Activated T-helper 1 cell treated with anti-CD3 and anti-CD28 coated beads, Interleukin-12 subunit alpha, Interleukin-12 subunit beta, Interleukin-2, Interleukin-4 antibody, amounts not matched to agents 30 ng/mL and 10 ng/mL and 1 ng/mL, durations not matched to agents 14 hours and 24 hours and 36 hours (primary cell): ENCODE measurements at regions of chr4 and their contacts with region 1.

Region 1: DNA sequence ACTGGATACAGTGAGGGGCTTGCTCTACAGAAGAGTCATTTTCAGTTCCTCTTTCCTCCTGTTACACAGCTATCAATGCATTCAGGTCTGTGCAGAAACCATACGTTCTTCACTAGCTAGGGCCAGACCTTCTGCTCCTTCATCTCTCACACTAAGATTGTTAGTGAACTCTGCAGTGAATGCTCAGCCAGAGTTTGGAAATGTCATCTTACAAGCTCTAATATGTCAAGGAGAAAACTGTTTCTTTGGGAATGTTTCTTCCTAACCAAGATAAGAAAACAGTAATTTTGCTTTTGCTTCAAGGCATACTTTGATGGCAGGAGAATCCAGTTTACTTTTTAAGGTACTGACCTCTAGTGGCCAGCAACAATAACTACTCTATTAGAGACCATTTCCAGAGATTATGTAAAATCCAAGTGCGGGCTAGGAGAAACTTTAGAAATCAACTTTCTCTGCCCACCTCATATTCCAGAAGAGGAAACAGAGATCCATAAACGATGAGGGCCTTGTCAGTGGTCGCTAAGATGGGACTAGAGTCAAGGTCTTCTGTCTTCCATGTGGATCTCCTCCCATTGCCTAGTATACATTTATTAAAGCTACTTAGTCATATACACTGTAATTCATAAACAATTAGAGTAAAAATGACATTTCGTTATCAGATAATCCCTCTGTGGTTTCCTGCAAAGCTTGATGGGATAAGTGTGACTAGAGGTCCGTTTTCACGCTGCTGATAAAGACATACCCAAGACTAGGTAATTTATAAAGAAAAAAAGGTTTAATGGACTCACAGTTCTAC is 12.1 kb upstream of the CC2D2A start:
- DNase-seq: no peak
- H3K4me3 Mint-ChIP-seq: no peak overlapping the region
- H3K27ac Mint-ChIP-seq: no peak overlapping the region
- H3K4me1 Mint-ChIP-seq: no peaks in the 10 kb centered on the region
- H3K27me3 Mint-ChIP-seq: peaks cover 7% of the 10 kb centered on the region

Region 2: DNA sequence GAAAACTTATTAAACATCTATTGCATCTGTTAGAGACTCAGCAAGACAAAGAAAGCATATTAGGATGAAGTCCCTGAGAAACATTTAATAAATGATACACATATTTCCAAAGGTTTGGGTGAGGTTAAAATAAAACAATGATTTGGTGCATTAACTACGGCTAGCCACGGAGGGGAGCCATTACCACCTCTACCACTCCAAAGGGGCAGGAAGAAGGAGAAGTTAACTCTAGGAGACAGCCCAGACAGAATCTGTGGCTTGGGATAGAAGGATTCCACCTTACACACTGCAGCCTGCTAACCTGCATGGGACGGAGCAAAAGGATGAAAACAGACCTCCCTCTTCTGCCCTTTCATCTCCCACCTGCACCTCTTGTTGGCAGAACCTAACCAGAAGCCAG is 218.9 kb before region 1 on chr4:
- intact Hi-C with region 1: loop called (anchors 1 kb)
- DNase-seq: no peak
- H3K4me3 Mint-ChIP-seq: no peak overlapping the region
- H3K27ac Mint-ChIP-seq: no peak overlapping the region
- H3K4me1 Mint-ChIP-seq: peaks cover 19% of the 10 kb centered on the region
- H3K27me3 Mint-ChIP-seq: no peaks in the 10 kb centered on the region

Region 3: DNA sequence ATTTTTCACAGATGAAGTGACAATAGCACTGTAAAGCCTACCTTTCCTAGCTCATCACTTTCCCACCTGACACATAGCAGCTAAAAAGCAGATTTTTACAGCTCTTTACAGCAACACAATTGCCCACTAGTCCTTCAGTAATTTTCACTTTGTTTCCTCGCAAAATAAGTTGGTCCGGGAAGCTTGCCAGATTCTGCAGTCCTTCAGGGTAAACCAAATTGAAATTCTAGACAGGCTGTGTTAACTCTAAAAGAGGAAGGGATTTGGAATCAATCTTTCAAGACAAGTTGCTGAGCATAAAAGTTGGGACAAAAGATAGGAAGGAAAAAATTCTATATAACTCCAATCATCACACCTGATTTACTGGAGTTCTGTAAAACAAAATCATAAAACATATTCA is 21.1 kb before region 1 on chr4:
- intact Hi-C with region 1: no loop called
- DNase-seq: no peak
- H3K4me3 Mint-ChIP-seq: no peak overlapping the region
- H3K27ac Mint-ChIP-seq: no peak overlapping the region
- H3K4me1 Mint-ChIP-seq: no peaks in the 10 kb centered on the region
- H3K27me3 Mint-ChIP-seq: no peaks in the 10 kb centered on the region